ENCODE measurements at regions of chr12 and their contacts with region 1.

Region 1: GRCh38 chr12:113196996-113197395 is 11.5 kb downstream of the RITA1 start:
- DNase-seq: peak; percentile 76
- H3K4me3 ChIP-seq: no peak overlapping the region
- H3K27ac ChIP-seq: no peak overlapping the region
- H3K4me1 ChIP-seq: peaks cover 0 to 17% (median 12%) of the 10 kb centered on the region in 4 donors
- H3K27me3 ChIP-seq: no peaks in the 10 kb centered on the region
- CTCF ChIP-seq: peak; percentile 59 to 69 (median 64)
- EP300 ChIP-seq: no peak
- POLR2A ChIP-seq: no peak

Region 2: GRCh38 chr12:113285679-113286610 is 88.9 kb after region 1 on chr12:
- in situ Hi-C with region 1: no loop called
- intact Hi-C with region 1: no loop called
- DNase-seq: no peak
- H3K4me3 ChIP-seq: no peak overlapping the region
- H3K27ac ChIP-seq: no peak overlapping the region
- H3K4me1 ChIP-seq: no peaks in the 10 kb centered on the region
- H3K27me3 ChIP-seq: no peaks in the 10 kb centered on the region
- CTCF ChIP-seq: no peak
- EP300 ChIP-seq: no peak
- POLR2A ChIP-seq: no peak

Region 3: GRCh38 chr12:113359939-113360748 is 163.1 kb after region 1 on chr12:
- in situ Hi-C with region 1: no loop called
- intact Hi-C with region 1: loop called (anchors 10 kb)
- DNase-seq: no peak
- H3K4me3 ChIP-seq: no peak overlapping the region
- H3K27ac ChIP-seq: peak overlapping the region; percentile 81 to 88 (median 85)
- H3K4me1 ChIP-seq: peaks cover 0 to 22% (median 16%) of the 10 kb centered on the region in 4 donors
- H3K27me3 ChIP-seq: no peaks in the 10 kb centered on the region
- CTCF ChIP-seq: no peak
- EP300 ChIP-seq: no peak
- POLR2A ChIP-seq: no peak

Region 4: DNA sequence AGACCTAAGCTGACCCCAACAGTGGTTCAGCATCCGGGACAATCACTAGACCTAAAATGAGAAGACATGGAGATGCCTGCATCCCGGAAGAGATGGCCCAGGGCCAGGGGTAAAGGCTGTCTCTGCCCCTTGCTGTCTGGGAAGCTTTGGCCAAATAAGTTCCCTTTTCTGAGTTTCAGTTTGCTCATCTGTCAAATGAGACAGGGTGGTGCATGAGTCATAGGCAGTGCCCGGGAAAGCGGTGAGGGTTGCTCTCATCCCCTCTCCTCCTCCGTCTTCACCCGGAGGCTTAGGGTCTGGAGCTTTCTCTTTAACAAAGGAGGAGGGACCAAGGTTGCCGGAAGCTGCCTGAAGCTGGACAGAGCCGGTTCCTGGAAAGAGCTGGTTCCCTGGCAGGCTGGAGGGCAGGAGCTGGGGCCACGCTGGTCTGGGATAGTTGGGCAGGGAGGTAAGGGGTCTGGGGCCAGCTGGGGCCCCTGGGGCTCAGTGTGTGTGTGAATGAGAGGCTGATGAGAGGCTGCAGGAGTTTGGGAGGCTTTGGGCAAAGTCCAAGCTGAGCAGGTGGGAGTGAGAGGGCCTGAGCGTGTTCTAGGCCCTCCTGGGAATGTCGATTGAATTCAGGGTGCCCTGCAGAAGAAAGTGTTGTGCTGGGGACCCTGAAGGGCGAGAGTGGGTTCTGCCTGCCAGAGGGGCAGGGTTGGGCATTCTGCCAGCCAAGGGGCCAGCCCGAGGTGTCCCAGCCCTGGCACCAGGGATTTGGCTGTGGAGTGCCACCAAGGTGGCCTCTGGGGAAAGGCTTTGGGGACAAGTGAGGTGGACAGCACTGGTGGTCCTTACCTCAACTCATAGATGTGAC is 225.3 kb after region 1 on chr12 and contains the start of gene SDSL:
- in situ Hi-C with region 1: loop called in 1 of 4 experiments (anchors 10 kb)
- intact Hi-C with region 1: no loop called
- DNase-seq: peak; percentile 74
- H3K4me3 ChIP-seq: peak within 1 kb of the TSS; percentile 32 to 59 (median 44)
- H3K27ac ChIP-seq: peak within 1 kb of the TSS; percentile 66 to 75 (median 74)
- H3K4me1 ChIP-seq: peaks cover 0 to 22% (median 2%) of the 10 kb centered on the region in 4 donors
- H3K27me3 ChIP-seq: no peaks in the 10 kb centered on the region
- CTCF ChIP-seq: no peak
- EP300 ChIP-seq: no peak
- POLR2A ChIP-seq: peak; percentile 56
- total RNA-seq, gene SDSL: 7.4 to 16.8 (median 13.1) TPM

Region 5: DNA sequence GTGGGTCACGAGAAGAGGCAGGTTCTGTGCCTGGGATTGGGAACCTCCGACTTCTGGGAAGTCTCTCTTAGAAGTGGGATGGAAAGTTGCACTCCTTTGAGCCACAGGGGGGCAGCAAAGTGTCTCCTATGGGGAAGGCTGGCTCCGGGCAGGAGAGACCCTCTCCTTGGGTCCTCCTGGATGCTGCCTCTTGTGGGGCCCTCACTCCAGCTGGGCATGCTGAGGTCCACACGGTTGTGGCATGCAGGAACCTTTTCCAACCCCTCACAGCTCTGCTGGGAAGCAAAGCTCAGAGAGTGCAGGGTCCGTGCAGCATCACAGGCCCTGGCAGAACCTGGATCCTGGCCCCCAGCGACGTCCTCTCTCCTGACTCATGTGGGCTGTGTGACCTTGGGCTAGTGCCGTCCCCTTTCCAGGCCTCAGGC is 242.6 kb after region 1 on chr12:
- in situ Hi-C with region 1: loop called in 1 of 4 experiments (anchors 10 kb)
- intact Hi-C with region 1: no loop called
- DNase-seq: no peak
- H3K4me3 ChIP-seq: no peak overlapping the region
- H3K27ac ChIP-seq: no peak overlapping the region
- H3K4me1 ChIP-seq: no peaks in the 10 kb centered on the region
- H3K27me3 ChIP-seq: no peaks in the 10 kb centered on the region
- CTCF ChIP-seq: peak in 4 of 5 experiments; percentile 23 to 41 (median 34)
- EP300 ChIP-seq: no peak
- POLR2A ChIP-seq: no peak

Region 6: GRCh38 chr12:113804961-113805600 is 608.1 kb after region 1 on chr12:
- in situ Hi-C with region 1: no loop called
- intact Hi-C with region 1: no loop called
- DNase-seq: no peak
- H3K4me3 ChIP-seq: no peak overlapping the region
- H3K27ac ChIP-seq: no peak overlapping the region
- H3K4me1 ChIP-seq: no peaks in the 10 kb centered on the region
- H3K27me3 ChIP-seq: no peaks in the 10 kb centered on the region
- CTCF ChIP-seq: no peak
- EP300 ChIP-seq: no peak
- POLR2A ChIP-seq: no peak

Region 7: GRCh38 chr12:114547636-114548035 is 1350.6 kb after region 1 on chr12:
- in situ Hi-C with region 1: no loop called
- intact Hi-C with region 1: loop called (anchors 5 kb)
- DNase-seq: no peak
- H3K4me3 ChIP-seq: no peak overlapping the region
- H3K27ac ChIP-seq: no peak overlapping the region
- H3K4me1 ChIP-seq: no peaks in the 10 kb centered on the region
- H3K27me3 ChIP-seq: no peaks in the 10 kb centered on the region
- CTCF ChIP-seq: no peak
- EP300 ChIP-seq: no peak
- POLR2A ChIP-seq: no peak

Measured in transverse colon (tissue), 4 donors.